ENCODE measurements at regions of chr12 and their contacts with region 1.

Region 1: GRCh38 chr12:57751788-57752667 is at the start of gene CDK4:
- DNase-seq: peak; percentile 96 to 99
- H3K4me3 ChIP-seq: peak within 1 kb of the TSS; percentile 78
- H3K27ac ChIP-seq: peak within 1 kb of the TSS; percentile 65
- H3K4me1 ChIP-seq: peaks cover 27% of the 10 kb centered on the region
- H3K27me3 ChIP-seq: no peaks in the 10 kb centered on the region
- CTCF ChIP-seq: no peak
- total RNA-seq, gene CDK4: 156 and 194 TPM in 2 replicates

Region 2: DNA sequence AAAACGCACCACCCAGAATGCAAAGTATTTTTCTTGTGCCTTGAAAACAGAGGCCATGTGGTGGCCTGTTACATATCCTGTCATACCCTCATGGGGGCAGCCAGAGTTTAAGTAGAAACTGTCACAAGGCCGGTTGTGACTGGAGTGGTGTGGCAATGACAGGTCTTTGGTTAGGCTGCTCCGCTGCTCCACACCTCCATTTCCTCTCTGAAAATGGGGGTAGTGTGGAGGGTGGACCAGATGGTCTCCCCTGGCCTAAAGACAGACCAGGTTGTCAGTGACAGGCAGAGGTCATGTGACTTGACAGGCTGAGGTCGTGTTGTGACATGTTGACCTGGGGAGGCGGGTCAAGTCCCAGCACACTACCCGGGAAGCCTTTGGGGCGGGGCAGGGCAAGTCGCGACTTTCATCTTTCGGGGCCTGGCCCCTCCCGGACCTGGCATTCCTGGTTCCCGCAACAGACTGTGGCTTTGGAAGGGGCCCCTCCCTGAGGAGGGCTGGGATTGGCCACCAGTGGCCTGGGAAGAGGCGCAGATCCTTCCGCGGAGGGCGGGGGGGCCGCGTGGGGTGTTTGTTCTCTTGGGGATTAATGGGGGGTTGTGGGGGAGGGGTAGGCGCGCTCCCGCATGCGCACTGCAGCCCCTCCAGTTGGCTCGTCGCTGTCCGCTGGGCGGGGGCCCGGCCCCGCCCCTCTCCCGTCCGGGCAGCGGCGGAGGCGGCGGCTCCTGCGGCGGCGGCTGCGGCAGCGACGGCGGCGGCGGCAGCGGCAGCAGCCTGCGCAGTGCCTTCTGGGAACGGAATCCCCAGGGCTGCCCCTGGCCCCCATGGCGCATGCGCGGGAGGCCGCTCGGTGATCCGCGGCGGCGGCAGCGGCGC is 229.8 kb before region 1 on chr12 and contains the start of gene MBD6:
- CTCF ChIA-PET with region 1: no interaction called
- POLR2A ChIA-PET with region 1: no interaction called
- intact Hi-C with region 1: loop called (anchors 2 kb)
- DNase-seq: peak; percentile 72 to 87
- H3K4me3 ChIP-seq: peak within 1 kb of the TSS; percentile 98
- H3K27ac ChIP-seq: peak within 1 kb of the TSS; percentile 86
- H3K4me1 ChIP-seq: peaks cover 34% of the 10 kb centered on the region
- H3K27me3 ChIP-seq: no peaks in the 10 kb centered on the region
- CTCF ChIP-seq: no peak; the same call in 1 of the 2 replicates
- total RNA-seq, gene MBD6: 47.3 and 78.4 TPM in 2 replicates

Region 3: DNA sequence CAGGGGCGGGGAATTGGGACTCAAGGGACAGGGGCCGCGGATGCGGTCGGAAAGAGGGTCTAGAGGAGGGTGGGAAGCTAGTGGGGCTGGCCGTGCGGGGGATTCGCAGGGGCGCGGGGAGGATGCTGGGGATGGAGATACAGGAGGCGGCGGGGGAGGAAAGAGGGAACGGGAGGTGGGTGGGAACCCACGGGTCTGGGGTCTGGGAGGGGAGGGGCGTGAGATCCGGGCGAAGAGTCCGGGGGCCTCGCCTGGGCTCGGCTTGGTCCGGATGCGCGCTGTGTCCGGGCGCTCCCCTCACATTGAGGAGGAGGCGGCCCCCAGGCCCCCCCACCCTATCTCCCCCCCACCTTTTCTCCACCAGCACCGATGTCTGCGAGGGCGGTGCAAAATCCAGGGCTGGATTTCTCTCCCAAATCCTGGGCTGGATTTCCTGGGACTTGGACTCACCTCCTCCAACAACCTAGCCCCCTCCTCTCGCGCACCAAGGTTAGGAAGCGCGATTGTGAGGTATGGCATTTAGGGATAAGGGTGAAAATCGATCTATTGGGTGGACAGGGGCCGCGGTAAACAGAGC is 13.3 kb before region 1 on chr12 and contains the start of gene AGAP2:
- CTCF ChIA-PET with region 1: no interaction called
- POLR2A ChIA-PET with region 1: interaction called, 10 read pairs
- intact Hi-C with region 1: no loop called
- DNase-seq: no peak
- H3K4me3 ChIP-seq: no peak within 1 kb of the TSS
- H3K27ac ChIP-seq: no peak within 1 kb of the TSS
- H3K4me1 ChIP-seq: peaks cover 2% of the 10 kb centered on the region; the same call in 1 of the 2 replicates
- H3K27me3 ChIP-seq: peaks cover 14% of the 10 kb centered on the region
- CTCF ChIP-seq: no peak
- total RNA-seq, gene AGAP2: 0.40 and 0.50 TPM in 2 replicates

Region 4: DNA sequence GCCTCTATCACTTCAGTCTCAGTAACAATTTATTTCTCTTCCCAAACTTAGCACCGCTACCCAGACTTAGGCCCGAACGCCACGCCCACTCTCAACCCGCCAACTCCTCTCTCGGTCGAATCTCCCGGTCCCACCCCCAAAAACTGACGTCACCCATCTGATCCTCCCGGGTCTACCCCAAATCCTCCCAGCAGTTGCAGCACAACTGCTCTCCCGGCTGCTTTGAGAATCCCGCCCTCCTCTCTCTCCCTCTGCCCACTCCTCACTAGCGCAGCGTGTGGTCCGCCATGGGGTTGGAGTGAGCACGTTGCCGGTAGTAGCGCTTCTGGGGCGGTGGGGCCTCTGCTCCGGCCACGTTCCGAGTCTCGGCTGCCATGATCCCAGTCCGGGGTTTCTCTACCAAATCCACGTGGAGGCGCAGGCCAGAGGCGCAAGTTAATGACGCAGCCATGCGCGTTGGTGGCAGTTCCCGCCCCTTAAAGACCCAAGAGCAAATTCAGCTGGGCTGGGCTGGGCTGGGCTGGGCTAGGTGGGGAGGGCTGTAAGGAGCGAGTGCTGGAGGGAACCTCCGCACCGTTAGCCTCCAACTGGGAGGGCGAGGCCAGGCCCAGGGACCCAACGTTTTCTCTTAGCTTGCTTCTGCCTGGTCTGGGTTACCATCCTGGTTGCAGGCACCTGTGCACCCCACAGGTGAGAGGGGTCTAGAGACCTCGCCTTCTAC is 19.8 kb after region 1 on chr12 and contains the start of gene METTL1:
- CTCF ChIA-PET with region 1: interaction called, 3 read pairs
- POLR2A ChIA-PET with region 1: no interaction called
- intact Hi-C with region 1: loop called (anchors 2 kb)
- DNase-seq: peak; percentile 89 to 91
- H3K4me3 ChIP-seq: peak within 1 kb of the TSS; percentile 68
- H3K27ac ChIP-seq: peak within 1 kb of the TSS; percentile 75
- H3K4me1 ChIP-seq: peaks cover 8% of the 10 kb centered on the region; the same call in 1 of the 2 replicates
- H3K27me3 ChIP-seq: no peaks in the 10 kb centered on the region
- CTCF ChIP-seq: no peak
- total RNA-seq, gene METTL1: 15.8 and 17.9 TPM in 2 replicates